PC-9 (cell line): ENCODE measurements at regions of chr10 and their contacts with region 1.

Region 1: GRCh38 chr10:63629363-63630084 is 108.3 kb downstream of the REEP3 start:
- DNase-seq: peak; percentile 94 to 97
- H3K4me3 ChIP-seq: peak overlapping the region; percentile 76
- H3K27ac ChIP-seq: peak overlapping the region; percentile 78
- H3K4me1 ChIP-seq: peaks cover 24% of the 10 kb centered on the region
- H3K27me3 ChIP-seq: no peaks in the 10 kb centered on the region
- CTCF ChIP-seq: peak; percentile 86

Region 2: GRCh38 chr10:63227207-63227915 is 402.2 kb before region 1 on chr10:
- CTCF ChIA-PET with region 1: no interaction called
- POLR2A ChIA-PET with region 1: interaction called, 25 read pairs
- intact Hi-C with region 1: no loop called
- DNase-seq: no peak
- H3K4me3 ChIP-seq: no peak overlapping the region
- H3K27ac ChIP-seq: no peak overlapping the region
- H3K4me1 ChIP-seq: no peaks in the 10 kb centered on the region
- H3K27me3 ChIP-seq: no peaks in the 10 kb centered on the region
- CTCF ChIP-seq: no peak

Region 3: DNA sequence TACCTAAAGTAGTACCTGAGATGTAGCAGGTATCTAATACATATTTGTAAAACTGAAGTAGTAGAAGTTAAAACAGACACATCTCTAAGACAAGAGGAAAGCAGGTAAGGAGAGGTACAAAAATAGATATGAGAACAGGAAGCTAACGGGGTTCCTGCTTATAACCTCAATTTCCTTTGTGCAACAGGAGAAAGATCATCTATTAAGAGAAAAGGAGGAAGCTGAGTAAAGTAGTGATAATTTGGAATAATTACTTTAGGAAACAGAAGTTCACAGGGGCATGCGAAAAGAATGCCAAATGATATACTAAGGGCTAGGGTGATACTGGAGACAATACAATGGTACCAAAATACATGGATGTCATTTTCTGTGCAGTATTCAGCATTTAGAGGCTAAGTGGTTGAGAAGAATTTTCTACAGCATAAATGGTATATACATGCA is 387.7 kb before region 1 on chr10:
- CTCF ChIA-PET with region 1: no interaction called
- POLR2A ChIA-PET with region 1: no interaction called
- intact Hi-C with region 1: no loop called
- DNase-seq: no peak
- H3K4me3 ChIP-seq: no peak overlapping the region
- H3K27ac ChIP-seq: no peak overlapping the region
- H3K4me1 ChIP-seq: peaks cover 22% of the 10 kb centered on the region
- H3K27me3 ChIP-seq: no peaks in the 10 kb centered on the region
- CTCF ChIP-seq: no peak

Region 4: GRCh38 chr10:63437116-63437949 is 192.2 kb before region 1 on chr10:
- CTCF ChIA-PET with region 1: no interaction called
- POLR2A ChIA-PET with region 1: no interaction called
- intact Hi-C with region 1: loop called (anchors 2 kb)
- DNase-seq: no peak
- H3K4me3 ChIP-seq: no peak overlapping the region
- H3K27ac ChIP-seq: no peak overlapping the region
- H3K4me1 ChIP-seq: peaks cover 23% of the 10 kb centered on the region
- H3K27me3 ChIP-seq: no peaks in the 10 kb centered on the region
- CTCF ChIP-seq: no peak

Region 5: GRCh38 chr10:63521416-63522276 is 107.9 kb before region 1 on chr10:
- CTCF ChIA-PET with region 1: no interaction called
- POLR2A ChIA-PET with region 1: no interaction called
- intact Hi-C with region 1: loop called (anchors 2 kb)
- DNase-seq: peak; percentile 54 to 74
- H3K4me3 ChIP-seq: peak overlapping the region; percentile 74
- H3K27ac ChIP-seq: peak overlapping the region; percentile 89
- H3K4me1 ChIP-seq: peaks cover 39% of the 10 kb centered on the region
- H3K27me3 ChIP-seq: no peaks in the 10 kb centered on the region
- CTCF ChIP-seq: no peak

Region 6: GRCh38 chr10:63720072-63720537 is 90.6 kb after region 1 on chr10:
- CTCF ChIA-PET with region 1: interaction called, 8 read pairs
- POLR2A ChIA-PET with region 1: interaction called, 4 read pairs
- intact Hi-C with region 1: loop called (anchors 1 kb)
- DNase-seq: peak; percentile 53 to 65
- H3K4me3 ChIP-seq: no peak overlapping the region
- H3K27ac ChIP-seq: no peak overlapping the region
- H3K4me1 ChIP-seq: peaks cover 4% of the 10 kb centered on the region; the same call in 1 of the 2 replicates
- H3K27me3 ChIP-seq: no peaks in the 10 kb centered on the region
- CTCF ChIP-seq: peak; percentile 100